Right cardiac atrium (tissue), 5 donors: ENCODE measurements at regions of chr10 and their contacts with region 1.

Region 1: GRCh38 chr10:70602665-70603448 is at the start of gene PRF1:
- DNase-seq: peak in 2 of 3 donors; percentile 73 to 78
- ATAC-seq: peak; percentile 36 to 57
- H3K4me3 ChIP-seq: no peak within 1 kb of the TSS
- H3K27ac ChIP-seq: no peak within 1 kb of the TSS
- H3K4me1 ChIP-seq: no peaks in the 10 kb centered on the region
- H3K27me3 ChIP-seq: no peaks in the 10 kb centered on the region
- total RNA-seq, gene PRF1: 0.81 to 2.9 (median 1.9) TPM

Region 2: DNA sequence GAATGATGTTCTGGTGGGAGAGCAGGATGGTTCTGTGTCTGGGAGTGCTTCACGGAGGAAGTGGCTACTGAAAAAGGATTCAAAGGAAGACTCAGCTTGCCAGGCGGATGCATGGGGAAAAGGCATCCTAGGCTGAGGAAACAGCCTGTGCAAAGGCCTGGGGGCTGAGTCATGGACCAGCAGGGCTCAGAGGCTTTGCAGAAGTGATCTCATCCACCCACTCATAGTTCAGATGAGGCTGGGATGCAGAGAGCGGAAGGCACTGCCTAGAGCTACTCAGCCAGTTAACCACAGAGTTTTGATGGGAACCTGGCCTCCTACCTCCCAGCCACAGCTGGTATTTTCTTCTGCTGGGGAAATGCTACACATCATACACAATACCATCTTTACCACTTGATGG is 53.6 kb after region 1 on chr10:
- intact Hi-C with region 1: loop called in 1 of 4 experiments (anchors 10 kb)
- DNase-seq: no peak
- ATAC-seq: peak in 1 of 2 donors; percentile 34
- H3K4me3 ChIP-seq: no peak overlapping the region
- H3K27ac ChIP-seq: no peak overlapping the region
- H3K4me1 ChIP-seq: peaks cover 5% of the 10 kb centered on the region
- H3K27me3 ChIP-seq: no peaks in the 10 kb centered on the region